WTC11 (cell line): ENCODE measurements at regions of chr1 and their contacts with region 1.

Region 1: DNA sequence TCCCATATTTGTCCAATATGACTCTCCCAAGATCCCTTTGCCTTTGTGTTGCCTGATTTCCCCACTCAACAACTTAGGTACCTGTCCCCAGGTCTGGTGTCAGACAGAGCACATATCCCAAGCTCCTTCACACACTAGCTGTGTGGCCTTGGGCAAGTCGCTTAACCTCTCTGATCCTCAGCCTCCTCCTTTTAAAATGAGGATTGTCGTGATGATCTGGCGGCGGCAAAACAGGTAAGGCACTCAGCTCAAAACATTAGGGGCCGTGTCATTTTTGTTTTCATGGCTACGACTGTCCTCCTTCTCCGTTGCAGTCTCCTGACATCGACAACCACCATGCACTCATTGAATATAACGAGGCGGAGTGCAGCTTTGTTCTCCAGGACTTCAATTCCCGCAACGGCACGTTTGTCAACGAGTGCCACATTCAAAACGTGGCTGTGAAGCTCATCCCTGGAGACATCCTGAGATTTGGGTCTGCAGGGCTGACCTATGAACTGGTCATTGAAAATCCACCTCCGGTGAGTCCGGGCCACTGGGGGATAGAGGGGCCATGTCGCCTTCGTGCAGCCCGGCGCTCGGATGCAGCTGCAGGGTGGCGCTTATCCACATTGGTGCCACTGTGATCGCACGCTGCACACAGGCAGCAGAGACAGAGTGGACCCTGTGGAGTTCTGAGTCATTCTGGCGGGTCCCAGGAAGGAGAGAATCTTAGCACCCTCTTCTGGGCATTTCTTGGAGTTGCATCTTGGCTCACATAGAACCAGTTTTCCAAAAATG is 25.2 kb downstream of the FHAD1 start:
- DNase-seq: peak; percentile 69
- ATAC-seq: peak; percentile 99
- H3K4me3 Mint-ChIP-seq: peak overlapping the region; percentile 49
- H3K27ac Mint-ChIP-seq: no peak overlapping the region
- H3K4me1 Mint-ChIP-seq: peaks cover 9% of the 10 kb centered on the region
- H3K27me3 Mint-ChIP-seq: peaks cover 6% of the 10 kb centered on the region
- CTCF ChIP-seq: peak; percentile 66; the same call in 1 of the 2 replicates

Region 2: GRCh38 chr1:15106608-15107007 is 165.6 kb before region 1 on chr1:
- CTCF ChIA-PET with region 1: interaction called, 15 read pairs
- POLR2A ChIA-PET with region 1: no interaction called
- DNase-seq: no peak
- ATAC-seq: no peak
- H3K4me3 Mint-ChIP-seq: no peak overlapping the region
- H3K27ac Mint-ChIP-seq: no peak overlapping the region
- H3K4me1 Mint-ChIP-seq: peaks cover 26% of the 10 kb centered on the region
- H3K27me3 Mint-ChIP-seq: peaks cover 8% of the 10 kb centered on the region
- CTCF ChIP-seq: no peak

Region 3: GRCh38 chr1:15206418-15207030 is 65.7 kb before region 1 on chr1:
- CTCF ChIA-PET with region 1: interaction called, 10 read pairs
- POLR2A ChIA-PET with region 1: no interaction called
- DNase-seq: no peak
- ATAC-seq: peak; percentile 81
- H3K4me3 Mint-ChIP-seq: peak overlapping the region; percentile 62
- H3K27ac Mint-ChIP-seq: peak overlapping the region; percentile 98
- H3K4me1 Mint-ChIP-seq: peaks cover 64% of the 10 kb centered on the region
- H3K27me3 Mint-ChIP-seq: no peaks in the 10 kb centered on the region
- CTCF ChIP-seq: no peak

Region 4: DNA sequence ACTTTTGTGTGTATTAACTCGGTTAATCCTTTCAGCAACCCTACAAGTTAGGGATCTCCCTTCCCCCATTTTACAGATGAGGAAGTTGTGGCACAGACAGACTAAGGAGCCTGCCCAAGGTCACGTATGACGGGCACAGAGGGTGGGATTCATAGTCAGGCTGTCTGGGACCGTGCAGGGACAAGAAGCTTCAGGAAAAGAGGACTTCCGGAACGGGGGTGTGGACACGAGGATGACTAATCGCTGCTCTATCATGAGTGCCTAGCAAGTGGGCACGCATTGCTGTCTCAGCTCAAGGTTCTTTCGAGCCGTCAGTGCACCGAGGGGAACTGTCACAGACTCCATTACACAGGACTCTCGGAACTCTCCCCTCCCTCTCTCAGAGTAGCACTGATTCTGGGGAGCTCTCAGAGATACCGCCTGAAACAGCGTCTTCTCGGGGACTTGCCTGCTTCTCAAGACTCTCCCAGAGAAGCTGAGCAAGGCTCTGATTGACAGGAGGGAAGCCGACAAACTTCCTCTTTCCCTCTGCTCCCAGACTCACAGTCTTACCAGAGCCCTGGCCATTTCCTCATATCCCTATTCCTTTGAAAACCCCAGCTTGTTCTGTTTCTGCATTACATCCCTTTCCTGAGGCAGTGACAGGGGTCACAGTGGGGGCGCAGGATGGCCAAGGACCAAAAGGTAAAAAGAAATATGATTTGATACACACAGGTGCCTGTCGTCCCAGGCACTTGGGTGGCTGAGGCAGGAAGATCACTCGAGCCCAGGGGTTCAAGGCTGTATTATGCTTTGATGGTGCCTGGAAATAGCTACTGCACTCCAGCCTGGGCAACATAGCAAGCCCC is 10.8 kb before region 1 on chr1:
- CTCF ChIA-PET with region 1: interaction called, 10 read pairs
- POLR2A ChIA-PET with region 1: no interaction called
- DNase-seq: no peak
- ATAC-seq: no peak
- H3K4me3 Mint-ChIP-seq: no peak overlapping the region
- H3K27ac Mint-ChIP-seq: no peak overlapping the region
- H3K4me1 Mint-ChIP-seq: 0 out of 2 replicates have a peak, but pooled peaks cover 3% of the 10 kb centered on the region
- H3K27me3 Mint-ChIP-seq: peaks cover 6% of the 10 kb centered on the region
- CTCF ChIP-seq: no peak

Region 5: DNA sequence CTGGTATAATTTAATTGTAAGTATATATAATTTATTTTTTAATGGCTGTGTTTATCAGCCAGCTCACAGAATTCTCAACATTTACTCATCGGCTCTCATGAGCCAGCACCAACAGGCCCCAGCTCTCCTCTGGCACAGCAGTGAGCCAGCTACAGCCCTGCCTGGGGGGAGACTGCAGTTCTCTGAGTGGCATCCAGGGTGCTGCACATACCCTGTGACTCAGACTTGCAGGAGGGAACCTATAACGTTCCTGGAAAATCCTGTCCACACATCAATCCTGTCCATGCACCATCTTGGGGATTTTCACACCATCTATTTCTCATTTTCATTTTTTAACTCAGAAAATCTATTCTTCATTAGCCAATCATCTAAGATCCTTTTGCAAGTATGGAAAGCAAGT is 11.3 kb after region 1 on chr1:
- CTCF ChIA-PET with region 1: interaction called, 12 read pairs
- POLR2A ChIA-PET with region 1: no interaction called
- DNase-seq: no peak
- ATAC-seq: peak; percentile 26; the same call in 1 of the 2 replicates
- H3K4me3 Mint-ChIP-seq: no peak overlapping the region
- H3K27ac Mint-ChIP-seq: no peak overlapping the region
- H3K4me1 Mint-ChIP-seq: no peaks in the 10 kb centered on the region
- H3K27me3 Mint-ChIP-seq: peaks cover 5% of the 10 kb centered on the region; the same call in 1 of the 2 replicates
- CTCF ChIP-seq: no peak